HAP-1 (cell line): ENCODE measurements at regions of chr2 and their contacts with region 1.

Region 1: GRCh38 chr2:156589381-156590079 is 153.4 kb downstream of the GPD2 start:
- DNase-seq: peak; percentile 32 to 71
- H3K4me3 ChIP-seq: no peak overlapping the region
- H3K4me1 ChIP-seq: peaks cover 45% of the 10 kb centered on the region
- H3K27me3 ChIP-seq: no peaks in the 10 kb centered on the region

Region 2: GRCh38 chr2:156341452-156342253 is 247.9 kb before region 1 on chr2:
- in situ Hi-C with region 1: loop called (anchors 25 kb)
- DNase-seq: peak; percentile 96 to 97
- H3K4me3 ChIP-seq: peak overlapping the region; percentile 86
- H3K4me1 ChIP-seq: peaks cover 47% of the 10 kb centered on the region
- H3K27me3 ChIP-seq: no peaks in the 10 kb centered on the region

Region 3: DNA sequence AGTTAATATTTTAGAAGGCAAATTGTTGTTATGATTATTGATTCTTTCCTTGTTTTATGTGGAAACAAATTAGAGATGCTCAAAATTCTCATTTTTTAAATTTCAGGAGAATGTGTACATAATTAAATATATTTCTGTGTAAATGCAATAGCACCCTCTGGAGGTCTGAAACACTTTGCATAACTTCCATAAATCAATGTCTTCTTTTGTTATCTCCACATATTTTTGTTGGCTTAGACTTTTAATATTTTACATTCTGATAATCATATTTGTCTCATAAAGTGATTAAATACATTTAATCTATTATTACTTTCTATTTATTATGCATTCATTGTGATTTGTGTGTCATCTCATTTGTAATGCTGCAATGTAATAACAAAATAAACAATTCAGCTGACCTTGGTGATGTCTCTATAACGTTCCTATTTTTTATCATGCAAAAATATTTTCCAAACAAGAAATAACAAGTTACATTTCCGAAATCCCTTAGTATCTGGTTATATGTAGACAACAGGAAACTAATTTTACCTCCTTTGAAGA is 466.2 kb after region 1 on chr2:
- in situ Hi-C with region 1: loop called (anchors 10 kb)
- DNase-seq: peak in 1 of 2 experiments; percentile 58
- H3K4me3 ChIP-seq: no peak overlapping the region
- H3K4me1 ChIP-seq: peaks cover 16% of the 10 kb centered on the region
- H3K27me3 ChIP-seq: no peaks in the 10 kb centered on the region